SK-N-SH (cell line): ENCODE measurements at regions of chr2 and their contacts with region 1.

Region 1: DNA sequence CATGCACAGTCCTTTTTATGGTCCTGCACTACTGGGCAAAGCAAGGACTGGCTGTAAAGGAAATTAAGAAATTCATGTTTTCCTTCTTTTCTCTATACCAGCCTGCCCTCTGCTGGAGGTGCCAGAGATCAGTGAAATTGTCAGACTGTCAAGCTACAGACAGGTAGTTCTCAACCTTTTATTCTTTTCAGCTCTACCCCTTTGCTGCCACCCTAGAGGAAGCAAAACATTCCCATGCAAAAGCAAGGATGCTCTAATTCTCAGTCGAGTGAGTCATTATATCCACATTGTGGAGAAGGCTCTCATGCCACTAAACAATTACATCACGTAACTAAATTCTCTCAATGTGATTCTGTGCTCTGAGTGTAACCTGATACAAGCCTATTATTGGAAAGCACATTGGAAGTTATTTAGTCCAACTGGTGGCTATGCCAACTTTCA is 25.0 kb upstream of the RAPGEF4 start:
- DNase-seq: peak; percentile 67
- H3K4me3 ChIP-seq: peak overlapping the region in 1 of 2 experiments; percentile 31; a peak in 1 of 4 replicates
- H3K27ac ChIP-seq: peak overlapping the region in 1 of 2 experiments; percentile 55; a peak in 1 of 4 replicates
- H3K4me1 ChIP-seq: peaks cover 0 to 4% of the 10 kb centered on the region in 2 experiments; a peak in 2 of 4 replicates
- H3K27me3 ChIP-seq: no peaks in the 10 kb centered on the region
- CTCF ChIP-seq: peak; percentile 84
- EP300 ChIP-seq: no peak
- RAD21 ChIP-seq: peak; percentile 88

Region 2: GRCh38 chr2:172496160-172496608 is 214.4 kb before region 1 on chr2:
- CTCF ChIA-PET with region 1: no interaction called
- POLR2A ChIA-PET with region 1: no interaction called
- DNase-seq: no peak
- H3K4me3 ChIP-seq: no peak overlapping the region
- H3K27ac ChIP-seq: no peak overlapping the region
- H3K4me1 ChIP-seq: no peaks in the 10 kb centered on the region
- H3K27me3 ChIP-seq: no peaks in the 10 kb centered on the region
- CTCF ChIP-seq: no peak
- EP300 ChIP-seq: no peak
- RAD21 ChIP-seq: no peak

Region 3: GRCh38 chr2:172588931-172589330 is 121.7 kb before region 1 on chr2:
- CTCF ChIA-PET with region 1: interaction called, 50 read pairs
- POLR2A ChIA-PET with region 1: no interaction called
- DNase-seq: no peak
- H3K4me3 ChIP-seq: no peak overlapping the region
- H3K27ac ChIP-seq: no peak overlapping the region
- H3K4me1 ChIP-seq: peaks cover 0 to 2% of the 10 kb centered on the region in 2 experiments; a peak in 1 of 4 replicates
- H3K27me3 ChIP-seq: no peaks in the 10 kb centered on the region
- CTCF ChIP-seq: no peak
- EP300 ChIP-seq: no peak
- RAD21 ChIP-seq: no peak

Region 4: DNA sequence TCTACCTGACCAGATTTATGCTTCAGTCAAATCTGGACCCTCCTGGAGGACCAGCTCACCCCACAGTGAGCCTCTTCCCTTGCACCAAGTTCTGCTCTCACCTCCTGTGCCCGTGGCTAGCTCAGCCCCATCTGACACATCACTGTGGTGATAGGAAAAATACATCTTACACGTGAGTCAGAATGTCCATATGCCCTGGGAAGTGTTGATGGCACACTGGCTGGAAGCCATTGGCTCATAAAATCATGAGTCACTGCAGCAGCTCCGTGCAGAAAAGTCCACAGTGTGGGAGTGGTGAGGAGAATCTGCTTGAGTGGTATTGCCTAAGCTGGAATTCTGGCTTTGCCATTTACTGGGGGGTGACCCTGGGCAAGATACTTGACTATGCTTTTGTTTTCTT is 17.6 kb before region 1 on chr2:
- CTCF ChIA-PET with region 1: interaction called, 14 read pairs
- POLR2A ChIA-PET with region 1: no interaction called
- DNase-seq: no peak
- H3K4me3 ChIP-seq: no peak overlapping the region
- H3K27ac ChIP-seq: peak overlapping the region in 1 of 2 experiments; percentile 47; a peak in 2 of 4 replicates
- H3K4me1 ChIP-seq: peaks cover 4 to 15% of the 10 kb centered on the region in 2 experiments
- H3K27me3 ChIP-seq: no peaks in the 10 kb centered on the region
- CTCF ChIP-seq: no peak
- EP300 ChIP-seq: peak in 1 of 2 experiments; percentile 85; a peak in 2 of 4 replicates
- RAD21 ChIP-seq: no peak

Region 5: GRCh38 chr2:172698041-172698863 is 12.4 kb before region 1 on chr2:
- CTCF ChIA-PET with region 1: interaction called, 14 read pairs
- POLR2A ChIA-PET with region 1: no interaction called
- DNase-seq: no peak
- H3K4me3 ChIP-seq: no peak overlapping the region
- H3K27ac ChIP-seq: peak overlapping the region in 1 of 2 experiments; percentile 74; a peak in 2 of 4 replicates
- H3K4me1 ChIP-seq: peaks cover 0 to 29% of the 10 kb centered on the region in 2 experiments; a peak in 3 of 4 replicates
- H3K27me3 ChIP-seq: no peaks in the 10 kb centered on the region
- CTCF ChIP-seq: no peak
- EP300 ChIP-seq: peak in 1 of 2 experiments; percentile 30; a peak in 1 of 4 replicates
- RAD21 ChIP-seq: no peak

Region 6: GRCh38 chr2:172726172-172726735 is 15.7 kb after region 1 on chr2:
- CTCF ChIA-PET with region 1: interaction called, 14 read pairs
- POLR2A ChIA-PET with region 1: no interaction called
- DNase-seq: no peak
- H3K4me3 ChIP-seq: no peak overlapping the region
- H3K27ac ChIP-seq: no peak overlapping the region
- H3K4me1 ChIP-seq: no peaks in the 10 kb centered on the region
- H3K27me3 ChIP-seq: no peaks in the 10 kb centered on the region
- CTCF ChIP-seq: no peak
- EP300 ChIP-seq: no peak
- RAD21 ChIP-seq: no peak